ENCODE measurements at regions of chr1 and their contacts with region 1.

Region 1: DNA sequence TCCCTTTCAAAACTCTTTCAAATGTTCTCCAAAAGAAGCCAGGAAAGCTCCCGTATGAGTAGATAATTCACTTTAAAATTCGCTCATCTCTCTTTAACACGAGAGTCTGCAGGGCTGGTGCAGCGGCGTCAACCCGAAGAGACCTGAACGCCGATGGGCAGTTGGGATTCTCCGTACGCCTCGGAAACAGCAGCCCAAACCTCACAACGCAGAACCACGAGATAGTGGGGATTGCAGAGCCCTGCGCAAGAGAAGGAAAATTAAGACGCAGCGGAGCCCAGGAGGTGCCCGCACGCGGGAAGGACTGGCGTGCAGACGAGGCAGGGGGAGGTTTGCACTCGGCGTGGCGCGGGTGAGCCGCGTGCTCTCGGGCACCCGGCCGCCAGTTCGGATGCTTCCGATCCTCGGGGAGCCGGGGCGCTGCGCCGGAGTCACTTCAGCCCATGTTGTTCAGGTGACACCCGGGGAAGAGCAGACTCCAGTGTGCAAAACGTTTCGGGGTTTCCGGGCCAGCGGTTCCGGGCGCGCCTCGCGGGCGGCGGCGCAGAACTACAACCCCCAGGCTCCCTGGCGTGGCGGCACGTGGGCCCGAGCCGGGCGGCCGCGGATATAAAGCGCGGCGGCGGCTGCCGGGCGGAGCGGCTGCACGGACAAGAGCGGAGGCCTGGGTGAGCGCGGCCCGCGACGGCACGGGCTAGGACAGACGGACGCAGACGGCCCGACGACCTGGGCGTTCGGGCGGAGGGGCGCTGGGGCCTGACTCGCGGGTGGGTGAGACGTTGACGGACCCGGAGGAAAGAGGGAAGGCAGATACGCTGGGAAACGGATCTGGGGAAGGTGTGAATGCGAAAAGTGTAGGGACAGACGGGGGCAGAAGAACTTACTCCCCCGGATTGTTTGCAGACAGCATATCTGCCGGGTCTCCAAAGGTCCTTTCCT is at the start of gene NPL:
- DNase-seq: peak; percentile 10
- H3K4me3 ChIP-seq: peak within 1 kb of the TSS; percentile 68
- H3K27ac ChIP-seq: no peak within 1 kb of the TSS
- H3K27me3 ChIP-seq: peaks cover 38% of the 10 kb centered on the region
- CTCF ChIP-seq: no peak
- polyA plus RNA-seq, gene NPL: 0.48 and 0.55 TPM in 2 replicates

Region 2: DNA sequence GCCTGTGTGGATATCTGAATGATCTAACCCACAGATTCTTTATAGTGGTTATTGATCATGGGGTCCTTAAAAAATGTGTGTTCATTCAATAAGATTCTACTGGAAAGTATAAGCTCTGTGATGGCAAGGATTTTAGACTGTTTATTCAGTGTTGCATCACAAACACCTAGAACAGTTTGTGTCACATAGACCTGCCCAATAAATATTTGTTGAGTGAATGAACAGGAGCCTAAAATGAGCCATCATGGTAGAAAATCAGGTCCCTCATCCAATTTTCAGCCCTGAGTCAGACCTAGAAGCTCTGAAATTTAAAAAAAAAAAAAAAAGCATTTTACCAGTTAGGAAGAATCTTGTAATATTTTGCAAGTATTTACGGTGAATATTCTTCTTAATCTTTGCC is 341.7 kb before region 1 on chr1:
- CTCF ChIA-PET with region 1: interaction called, 15 read pairs
- POLR2A ChIA-PET with region 1: no interaction called
- DNase-seq: no peak
- H3K4me3 ChIP-seq: no peak overlapping the region
- H3K27ac ChIP-seq: no peak overlapping the region
- H3K27me3 ChIP-seq: no peaks in the 10 kb centered on the region
- CTCF ChIP-seq: no peak

Region 3: DNA sequence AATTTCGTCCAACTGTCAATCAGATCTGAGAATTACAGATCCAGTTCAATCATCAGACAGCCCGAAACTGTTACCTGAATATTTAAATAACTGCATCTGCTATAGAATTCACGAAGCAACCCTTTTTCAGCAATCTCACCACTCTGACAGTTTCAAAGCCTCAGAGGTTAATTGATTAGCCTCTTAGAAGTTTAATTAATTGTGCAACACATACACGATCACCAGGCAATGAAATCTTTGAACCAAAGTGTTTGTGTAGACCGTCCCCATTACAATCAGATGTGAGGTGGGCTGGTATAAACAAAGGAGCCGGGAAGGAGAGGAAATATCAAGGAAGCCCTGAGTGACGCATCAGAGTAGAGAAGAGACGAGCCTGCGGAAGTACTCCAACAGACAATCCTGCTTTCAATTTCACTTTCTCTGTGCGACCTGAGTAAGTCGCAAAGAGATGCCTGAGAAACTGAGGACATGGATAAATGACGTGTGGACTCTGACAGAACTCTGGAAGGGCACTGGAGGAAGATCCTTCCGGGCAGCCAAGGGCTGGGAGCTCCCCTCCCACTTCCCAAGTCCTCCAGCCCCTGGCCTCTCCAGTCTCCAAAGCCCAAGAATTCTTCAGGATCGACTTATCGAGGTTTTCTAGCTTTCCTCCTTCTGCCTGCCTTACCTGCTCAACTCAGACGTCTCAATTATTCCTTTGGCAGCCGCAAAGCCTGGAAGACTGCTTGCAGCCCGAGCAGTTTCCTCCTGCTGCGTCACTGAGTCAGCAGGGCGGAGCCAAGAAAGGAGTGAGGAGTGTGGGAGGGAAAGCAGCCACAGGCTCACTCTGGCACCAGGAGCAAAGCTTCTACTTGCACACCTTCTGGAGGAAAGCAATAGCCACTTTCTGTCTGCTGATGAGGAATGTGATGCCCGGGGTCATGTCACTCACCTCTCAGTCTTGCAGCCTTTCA is 200.6 kb before region 1 on chr1 and contains the start of gene RNASEL:
- CTCF ChIA-PET with region 1: interaction called, 552 read pairs
- POLR2A ChIA-PET with region 1: no interaction called
- DNase-seq: peak; percentile 6
- H3K4me3 ChIP-seq: peak within 1 kb of the TSS; percentile 77
- H3K27ac ChIP-seq: peak within 1 kb of the TSS; percentile 91
- H3K27me3 ChIP-seq: peaks cover 9% of the 10 kb centered on the region
- CTCF ChIP-seq: no peak
- polyA plus RNA-seq, gene RNASEL: 4.9 and 6.2 TPM in 2 replicates